Gastrocnemius medialis (tissue), 4 donors: ENCODE measurements at regions of chr2 and their contacts with region 1.

Region 1: DNA sequence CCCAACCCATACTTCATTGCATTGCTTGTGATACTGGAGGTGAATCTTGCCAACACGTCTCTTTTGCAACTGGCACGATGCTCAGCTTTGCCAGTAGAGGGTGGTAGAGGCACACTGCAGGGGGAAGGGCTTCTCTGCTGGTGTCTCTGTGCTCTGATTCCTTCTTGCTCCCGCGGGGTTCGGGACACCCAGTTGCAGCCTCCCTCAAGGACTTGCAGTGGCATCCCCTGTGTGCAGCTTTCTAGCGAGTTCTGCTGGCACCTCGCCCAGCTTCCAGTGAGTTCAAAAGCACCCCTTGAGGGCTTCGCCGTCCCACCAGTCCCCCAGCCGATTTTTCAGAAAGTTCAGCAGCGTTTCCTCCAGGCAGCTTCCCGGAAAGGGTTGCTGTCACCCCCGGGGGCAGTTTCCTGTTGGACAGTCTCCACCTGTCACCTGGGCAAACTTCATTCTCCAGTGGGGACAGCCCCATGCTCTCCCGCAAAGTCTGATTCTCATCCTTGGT is 35.3 kb upstream of the EN1 start:
- DNase-seq: peak; percentile 31 to 53
- ATAC-seq: peak; percentile 68 to 83
- H3K4me3 ChIP-seq: peak overlapping the region in 2 of 4 donors; percentile 10 to 13
- H3K27ac ChIP-seq: no peak overlapping the region
- H3K4me1 ChIP-seq: no peaks in the 10 kb centered on the region
- H3K27me3 ChIP-seq: peaks cover 0 to 5% (median 0%) of the 10 kb centered on the region in 3 donors
- CTCF ChIP-seq: peak; percentile 64 to 89 (median 68)
- POLR2A ChIP-seq: no peak

Region 2: DNA sequence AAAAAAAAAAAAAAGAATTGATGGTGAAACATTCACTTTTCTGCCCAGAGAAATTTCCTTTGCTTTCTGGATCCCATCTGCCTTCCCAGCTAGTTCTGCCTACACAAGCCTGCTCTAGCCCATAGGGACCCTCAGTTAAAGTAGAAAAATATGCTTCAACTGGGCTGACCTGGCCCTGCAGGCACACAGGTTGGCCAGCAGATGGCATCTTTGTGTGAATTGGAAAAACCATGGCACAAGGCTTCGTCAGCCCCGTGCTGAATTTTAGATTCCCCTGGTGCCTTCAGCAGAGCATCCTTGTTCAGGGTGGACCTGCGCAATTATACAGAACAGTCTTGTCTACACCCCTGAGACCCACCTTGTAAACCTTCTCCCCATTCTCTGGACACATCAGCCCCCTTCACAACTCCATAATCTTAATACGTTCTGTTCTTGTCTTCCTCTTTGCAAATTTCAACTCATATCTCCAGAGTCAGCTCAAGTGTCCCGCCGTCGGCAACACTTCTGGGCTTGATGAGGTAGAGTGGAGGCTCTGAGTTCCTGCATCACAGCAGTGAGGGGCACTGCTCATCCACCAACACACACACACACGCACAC is 680.0 kb before region 1 on chr2:
- in situ Hi-C with region 1: loop called in 1 of 4 experiments (anchors 10 kb)
- intact Hi-C with region 1: no loop called
- DNase-seq: peak in 1 of 2 donors; percentile 34
- ATAC-seq: peak in 1 of 2 donors; percentile 78
- H3K4me3 ChIP-seq: no peak overlapping the region
- H3K27ac ChIP-seq: no peak overlapping the region
- H3K4me1 ChIP-seq: no peaks in the 10 kb centered on the region
- H3K27me3 ChIP-seq: no peaks in the 10 kb centered on the region
- CTCF ChIP-seq: peak; percentile 54 to 77 (median 61)
- POLR2A ChIP-seq: no peak

Region 3: DNA sequence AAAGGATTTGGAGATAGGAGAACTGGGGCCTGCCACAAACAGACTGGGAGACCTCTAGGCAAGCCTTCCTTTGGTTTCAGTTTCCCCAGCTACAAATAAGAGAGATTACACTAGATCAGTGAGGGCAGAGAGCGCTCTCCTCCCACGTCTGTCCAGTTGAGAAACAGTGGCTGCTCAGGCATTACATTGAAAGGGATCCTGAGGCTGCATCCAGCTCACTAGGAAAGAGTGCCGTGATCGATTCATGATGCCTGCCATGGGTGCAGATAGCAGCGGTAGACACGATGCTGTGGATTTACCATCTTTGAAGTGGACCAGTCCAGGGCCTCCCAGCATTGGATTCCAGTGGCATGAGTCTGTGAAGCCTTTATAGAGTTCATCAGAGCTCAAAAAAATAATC is 97.9 kb before region 1 on chr2:
- in situ Hi-C with region 1: no loop called
- intact Hi-C with region 1: no loop called
- DNase-seq: no peak
- ATAC-seq: no peak
- H3K4me3 ChIP-seq: no peak overlapping the region
- H3K27ac ChIP-seq: no peak overlapping the region
- H3K4me1 ChIP-seq: peaks cover 7 to 10% of the 10 kb centered on the region in 2 donors
- H3K27me3 ChIP-seq: no peaks in the 10 kb centered on the region
- CTCF ChIP-seq: no peak
- POLR2A ChIP-seq: no peak

Region 4: DNA sequence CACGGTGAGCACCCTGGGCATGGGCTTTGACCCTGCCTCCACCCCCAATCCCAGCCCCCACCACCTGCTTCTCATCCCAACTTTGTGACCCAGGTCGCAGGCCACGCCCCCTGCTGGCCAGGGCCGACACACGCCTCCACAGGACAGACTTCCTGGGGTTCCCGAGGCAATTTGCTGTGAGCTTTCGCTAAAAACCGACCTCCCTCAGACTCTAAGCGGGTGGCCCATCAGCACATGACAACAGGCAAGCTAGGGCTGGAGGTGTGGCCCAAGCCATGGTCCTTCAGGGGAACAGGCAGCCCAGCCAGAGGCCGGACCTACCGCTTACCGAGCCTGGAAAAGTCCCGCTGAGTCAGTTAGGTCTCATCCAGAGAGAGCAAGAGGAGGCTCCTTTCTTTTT is 243.9 kb after region 1 on chr2:
- in situ Hi-C with region 1: loop called in 1 of 4 experiments (anchors 25 kb)
- intact Hi-C with region 1: no loop called
- DNase-seq: no peak
- ATAC-seq: no peak
- H3K4me3 ChIP-seq: no peak overlapping the region
- H3K27ac ChIP-seq: no peak overlapping the region
- H3K4me1 ChIP-seq: no peaks in the 10 kb centered on the region
- H3K27me3 ChIP-seq: peaks cover 12 to 18% (median 16%) of the 10 kb centered on the region in 3 donors
- CTCF ChIP-seq: peak in 3 of 5 experiments; percentile 10 to 49 (median 31)
- POLR2A ChIP-seq: no peak

Region 5: GRCh38 chr2:119174216-119175037 is 291.7 kb after region 1 on chr2:
- in situ Hi-C with region 1: no loop called
- intact Hi-C with region 1: loop called (anchors 2 kb)
- DNase-seq: no peak
- ATAC-seq: peak in 1 of 2 donors; percentile 44
- H3K4me3 ChIP-seq: no peak overlapping the region
- H3K27ac ChIP-seq: no peak overlapping the region
- H3K4me1 ChIP-seq: no peaks in the 10 kb centered on the region
- H3K27me3 ChIP-seq: no peaks in the 10 kb centered on the region
- CTCF ChIP-seq: peak; percentile 38 to 67 (median 51)
- POLR2A ChIP-seq: no peak

Region 6: GRCh38 chr2:119290859-119291587 is 408.3 kb after region 1 on chr2:
- in situ Hi-C with region 1: loop called in 1 of 4 experiments (anchors 10 kb)
- intact Hi-C with region 1: loop called (anchors 5 kb)
- DNase-seq: peak; percentile 52 to 67
- ATAC-seq: peak; percentile 29 to 40
- H3K4me3 ChIP-seq: no peak overlapping the region
- H3K27ac ChIP-seq: no peak overlapping the region
- H3K4me1 ChIP-seq: peaks cover 12 to 25% of the 10 kb centered on the region in 2 donors
- H3K27me3 ChIP-seq: no peaks in the 10 kb centered on the region
- CTCF ChIP-seq: peak; percentile 46 to 90 (median 84)
- POLR2A ChIP-seq: no peak

Region 7: DNA sequence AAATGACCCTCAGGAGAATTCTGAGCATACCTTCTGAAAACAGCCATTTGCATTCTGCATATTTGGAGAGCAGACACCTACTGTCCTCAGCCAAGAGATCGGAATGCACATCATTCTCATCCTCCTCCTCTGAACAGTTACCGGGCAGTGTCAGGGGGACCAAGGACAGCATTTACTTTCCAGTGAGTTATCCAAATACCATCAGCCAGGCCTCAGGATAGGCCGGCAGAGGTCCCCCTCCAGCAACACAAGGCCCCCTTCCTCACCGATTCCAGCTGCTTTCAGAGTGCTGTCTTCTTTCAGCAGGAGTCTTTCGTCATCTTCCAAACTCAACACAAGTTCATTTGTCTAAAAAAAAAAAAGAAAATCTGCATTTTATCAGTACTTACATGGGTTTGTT is 428.6 kb after region 1 on chr2:
- in situ Hi-C with region 1: loop called in 2 of 4 experiments (anchors 25 kb)
- intact Hi-C with region 1: loop called (anchors 5 kb)
- DNase-seq: no peak
- ATAC-seq: no peak
- H3K4me3 ChIP-seq: no peak overlapping the region
- H3K27ac ChIP-seq: peak overlapping the region in 1 of 4 donors; percentile 2
- H3K4me1 ChIP-seq: peaks cover 0 to 17% of the 10 kb centered on the region in 2 donors
- H3K27me3 ChIP-seq: no peaks in the 10 kb centered on the region
- CTCF ChIP-seq: no peak
- POLR2A ChIP-seq: no peak